Activated CD8-positive, alpha-beta memory T cell treated with anti-CD3 and anti-CD28 coated beads, Interleukin-2, amount 10 ng/mL, durations not matched to agents 7 days and 5 days (primary cell): ENCODE measurements at regions of chr1 and their contacts with region 1.

Region 1: GRCh38 chr1:153510984-153511410 is 24.8 kb downstream of the S100A6 start:
- DNase-seq: peak; percentile 87
- ATAC-seq: peak; percentile 94
- H3K4me3 Mint-ChIP-seq: no peak overlapping the region
- H3K27ac Mint-ChIP-seq: peak overlapping the region; percentile 55
- H3K4me1 Mint-ChIP-seq: peaks cover 23% of the 10 kb centered on the region
- H3K27me3 Mint-ChIP-seq: no peaks in the 10 kb centered on the region

Region 2: DNA sequence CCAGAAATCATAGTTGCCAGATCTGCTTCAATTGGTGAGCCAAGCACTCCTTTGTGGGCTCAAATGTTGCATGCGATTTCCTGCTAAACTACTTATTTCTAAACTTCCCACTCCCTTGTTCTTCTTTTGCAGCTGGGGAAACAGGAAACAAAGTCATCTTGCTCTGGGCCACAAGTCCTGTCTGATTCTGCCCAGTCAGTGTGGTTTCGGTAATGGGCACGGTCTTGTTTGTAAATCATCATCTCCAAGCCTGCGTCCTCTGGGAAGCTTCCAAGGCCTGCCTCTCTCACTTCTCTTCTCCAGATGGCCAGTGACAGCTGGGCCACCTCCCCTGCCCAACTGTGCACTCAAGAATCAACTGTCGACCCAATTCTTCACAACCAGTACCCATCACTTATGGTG is 124.5 kb before region 1 on chr1:
- CTCF ChIA-PET with region 1: no interaction called
- DNase-seq: no peak
- ATAC-seq: no peak
- H3K4me3 Mint-ChIP-seq: no peak overlapping the region
- H3K27ac Mint-ChIP-seq: no peak overlapping the region
- H3K4me1 Mint-ChIP-seq: peaks cover 10% of the 10 kb centered on the region
- H3K27me3 Mint-ChIP-seq: peaks cover 35% of the 10 kb centered on the region

Region 3: GRCh38 chr1:153494976-153495535 is 15.9 kb before region 1 on chr1:
- CTCF ChIA-PET with region 1: interaction called, 15 read pairs
- DNase-seq: peak; percentile 78
- ATAC-seq: peak; percentile 76
- H3K4me3 Mint-ChIP-seq: no peak overlapping the region
- H3K27ac Mint-ChIP-seq: no peak overlapping the region
- H3K4me1 Mint-ChIP-seq: no peaks in the 10 kb centered on the region
- H3K27me3 Mint-ChIP-seq: peaks cover 31% of the 10 kb centered on the region

Region 4: DNA sequence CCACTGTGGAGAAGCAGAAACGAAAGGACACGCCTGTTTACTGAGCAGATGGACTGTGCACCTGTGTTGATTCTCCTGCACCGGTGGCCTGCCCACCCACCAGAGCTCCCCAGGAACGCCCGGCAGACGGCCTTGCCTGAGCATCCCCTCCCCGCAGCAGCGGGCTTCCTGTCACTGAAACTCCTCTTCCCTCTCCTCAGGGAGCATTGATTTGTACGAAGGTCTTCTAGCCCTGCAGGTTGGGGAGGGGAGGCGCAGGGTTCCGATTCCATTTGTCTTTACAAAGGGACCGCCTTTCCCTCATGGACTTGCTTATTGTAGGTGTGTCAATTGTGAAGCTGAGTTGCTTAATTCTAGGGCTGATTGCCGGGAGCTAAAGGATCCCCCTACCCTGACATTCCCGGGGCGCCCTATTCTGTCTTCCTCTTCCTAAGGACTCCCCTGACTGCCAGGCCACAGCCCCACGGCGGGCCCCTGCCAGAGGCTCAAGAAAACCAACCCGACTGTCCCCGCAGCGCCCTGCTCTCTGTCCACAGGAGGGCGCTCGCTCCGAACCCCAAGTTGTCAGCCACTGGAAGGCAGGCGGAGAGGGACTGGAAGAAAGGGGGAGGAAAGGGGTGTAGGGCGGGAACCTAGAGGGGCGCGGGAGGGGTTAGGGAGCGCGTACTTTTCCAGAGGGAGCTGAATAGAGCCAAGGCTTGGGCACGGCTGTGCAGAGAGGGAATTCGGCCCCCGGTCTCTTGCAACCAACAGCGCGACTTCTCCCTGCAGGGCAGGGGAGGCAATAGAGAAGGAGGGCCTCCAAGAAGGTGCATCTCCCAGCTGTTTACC is 22.0 kb after region 1 on chr1:
- CTCF ChIA-PET with region 1: interaction called, 51 read pairs
- DNase-seq: peak; percentile 89
- ATAC-seq: peak; percentile 32
- H3K4me3 Mint-ChIP-seq: peak overlapping the region; percentile 97
- H3K27ac Mint-ChIP-seq: peak overlapping the region; percentile 95
- H3K4me1 Mint-ChIP-seq: peaks cover 62% of the 10 kb centered on the region
- H3K27me3 Mint-ChIP-seq: no peaks in the 10 kb centered on the region

Region 5: DNA sequence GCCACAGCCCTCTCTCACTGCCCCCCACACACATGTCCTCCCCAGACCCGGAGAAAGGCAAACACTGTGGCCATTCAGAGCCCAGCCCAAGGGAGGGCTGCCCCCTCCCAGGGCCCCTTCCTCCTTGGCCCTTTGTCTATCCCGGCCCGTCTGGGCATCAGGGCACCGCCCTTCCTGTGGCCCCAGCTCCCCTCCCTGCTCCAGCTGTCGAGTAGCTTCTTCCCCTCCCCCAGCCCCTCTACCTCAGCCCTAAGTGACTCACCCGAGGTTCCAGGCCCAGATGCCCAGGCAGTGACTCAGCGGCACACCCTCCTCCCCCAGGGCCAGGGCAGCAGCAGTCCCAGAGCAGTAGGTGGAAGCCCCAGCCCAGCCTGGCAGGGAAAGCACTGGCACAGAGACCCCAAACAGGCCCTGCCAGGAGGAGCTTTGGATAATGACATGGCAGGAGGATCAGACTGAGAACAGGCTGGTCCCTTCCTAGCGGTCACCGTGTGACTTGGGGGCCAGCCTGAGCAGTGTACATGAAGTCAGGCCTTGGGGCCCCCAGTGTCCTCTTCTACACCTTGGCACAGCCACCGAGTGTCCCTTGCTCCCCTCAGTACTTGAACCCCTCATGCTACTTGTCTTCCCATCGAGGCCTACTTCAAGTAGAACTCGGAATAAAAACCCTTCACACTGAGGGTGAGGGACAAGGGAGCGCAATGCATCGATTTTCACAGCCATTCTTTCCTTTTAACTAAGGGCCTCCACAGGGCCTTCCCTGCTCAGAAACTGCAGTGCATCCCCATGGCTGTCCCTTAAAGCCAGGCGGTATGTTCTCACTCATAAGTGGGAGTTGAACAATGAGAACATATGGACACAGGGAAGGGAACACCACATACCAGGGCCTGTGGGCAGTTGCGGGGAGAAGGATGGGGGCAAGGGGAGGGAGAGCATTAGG is 55.7 kb after region 1 on chr1:
- CTCF ChIA-PET with region 1: interaction called, 167 read pairs
- DNase-seq: peak; percentile 93
- ATAC-seq: peak; percentile 94
- H3K4me3 Mint-ChIP-seq: peak overlapping the region; percentile 17
- H3K27ac Mint-ChIP-seq: peak overlapping the region; percentile 98
- H3K4me1 Mint-ChIP-seq: peaks cover 41% of the 10 kb centered on the region
- H3K27me3 Mint-ChIP-seq: peaks cover 5% of the 10 kb centered on the region

Region 6: GRCh38 chr1:153577624-153578051 is 66.6 kb after region 1 on chr1:
- CTCF ChIA-PET with region 1: interaction called, 167 read pairs
- DNase-seq: no peak
- ATAC-seq: no peak
- H3K4me3 Mint-ChIP-seq: no peak overlapping the region
- H3K27ac Mint-ChIP-seq: no peak overlapping the region
- H3K4me1 Mint-ChIP-seq: peaks cover 8% of the 10 kb centered on the region
- H3K27me3 Mint-ChIP-seq: peaks cover 33% of the 10 kb centered on the region

Region 7: GRCh38 chr1:153633716-153634665 is 123.0 kb after region 1 on chr1 and contains the start of gene CHTOP:
- CTCF ChIA-PET with region 1: interaction called, 23 read pairs
- DNase-seq: peak; percentile 99
- ATAC-seq: peak; percentile 92
- H3K4me3 Mint-ChIP-seq: peak within 1 kb of the TSS; percentile 99
- H3K27ac Mint-ChIP-seq: peak within 1 kb of the TSS; percentile 100
- H3K4me1 Mint-ChIP-seq: peaks cover 42% of the 10 kb centered on the region
- H3K27me3 Mint-ChIP-seq: no peaks in the 10 kb centered on the region
- total RNA-seq, gene CHTOP: 83.8 to 89.1 TPM